ENCODE measurements at regions of chr7 and their contacts with region 1.

Region 1: GRCh38 chr7:129169686-129170440 is 18.6 kb upstream of the SMO start:
- DNase-seq: no peak
- H3K4me3 ChIP-seq: peak overlapping the region; percentile 63 to 67
- H3K27ac ChIP-seq: peak overlapping the region in 1 of 2 donors; percentile 24
- H3K4me1 ChIP-seq: peaks cover 0 to 3% of the 10 kb centered on the region in 2 donors
- H3K27me3 ChIP-seq: no peaks in the 10 kb centered on the region
- CTCF ChIP-seq: no peak

Region 2: GRCh38 chr7:129188372-129188891 is 18.6 kb after region 1 on chr7 and contains the start of gene SMO:
- intact Hi-C with region 1: loop called (anchors 1 kb)
- DNase-seq: peak in 1 of 2 donors; percentile 72
- H3K4me3 ChIP-seq: peak within 1 kb of the TSS; percentile 86 to 93
- H3K27ac ChIP-seq: peak within 1 kb of the TSS in 1 of 2 donors; percentile 38
- H3K4me1 ChIP-seq: peaks cover 0 to 7% of the 10 kb centered on the region in 2 donors
- H3K27me3 ChIP-seq: no peaks in the 10 kb centered on the region
- CTCF ChIP-seq: no peak
- total RNA-seq, gene SMO: 12.9 TPM

Measured in ascending aorta (tissue), 2 donors.